IMR-90 (cell line): ENCODE measurements at regions of chr1 and their contacts with region 1.

Region 1: DNA sequence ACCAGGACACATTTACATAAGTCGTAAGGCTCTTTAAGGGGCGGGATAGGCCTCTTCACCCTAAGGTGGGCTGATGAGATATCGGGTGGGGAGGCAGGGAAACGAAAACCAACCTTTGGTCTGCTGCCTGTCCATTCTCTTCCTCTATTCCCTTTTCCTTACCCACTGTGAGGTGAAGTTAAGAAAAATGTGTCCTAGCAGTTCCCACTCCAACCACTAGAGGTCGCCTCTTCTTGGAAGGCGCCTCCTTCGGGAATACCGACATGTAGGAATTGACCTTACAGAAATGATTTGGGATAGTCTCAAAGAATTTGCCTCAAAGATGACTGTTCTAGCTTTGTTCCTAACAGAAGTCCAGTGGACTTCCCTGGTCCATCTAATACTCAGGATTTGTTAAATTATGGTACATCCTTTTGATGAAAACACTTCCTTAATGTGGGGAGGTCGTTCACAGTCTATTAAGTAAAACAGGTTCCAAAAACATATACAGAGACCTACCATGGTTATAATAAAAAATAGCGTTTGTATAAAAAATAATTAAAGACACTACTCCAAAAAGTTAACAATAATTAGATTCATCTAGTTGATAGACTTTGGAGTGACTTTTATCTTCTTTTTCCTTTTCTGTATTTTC is 14.1 kb downstream of the AZIN2 start:
- DNase-seq: peak; percentile 71
- ATAC-seq: no peak
- H3K4me3 ChIP-seq: no peak overlapping the region
- H3K27ac ChIP-seq: peak overlapping the region; percentile 43; the same call in 1 of the 2 replicates
- H3K4me1 ChIP-seq: peaks cover 35% of the 10 kb centered on the region
- H3K27me3 ChIP-seq: no peaks in the 10 kb centered on the region
- CTCF ChIP-seq: peak; percentile 93
- POLR2A ChIP-seq: no peak
- RAD21 ChIP-seq: peak; percentile 71

Region 2: GRCh38 chr1:32659581-32659980 is 435.5 kb before region 1 on chr1:
- CTCF ChIA-PET with region 1: no interaction called
- POLR2A ChIA-PET with region 1: no interaction called
- dilution Hi-C with region 1: no loop called
- in situ Hi-C with region 1: no loop called
- intact Hi-C with region 1: no loop called
- DNase-seq: no peak
- ATAC-seq: no peak
- H3K4me3 ChIP-seq: no peak overlapping the region
- H3K27ac ChIP-seq: no peak overlapping the region
- H3K4me1 ChIP-seq: peaks cover 2% of the 10 kb centered on the region; the same call in 1 of the 2 replicates
- H3K27me3 ChIP-seq: no peaks in the 10 kb centered on the region
- CTCF ChIP-seq: no peak
- POLR2A ChIP-seq: no peak
- RAD21 ChIP-seq: no peak

Region 3: GRCh38 chr1:32702599-32703478 is 392.2 kb before region 1 on chr1 and contains the start of gene SYNC:
- CTCF ChIA-PET with region 1: no interaction called
- POLR2A ChIA-PET with region 1: no interaction called
- dilution Hi-C with region 1: no loop called
- in situ Hi-C with region 1: no loop called
- intact Hi-C with region 1: loop called (anchors 10 kb)
- DNase-seq: peak; percentile 78
- ATAC-seq: peak; percentile 55
- H3K4me3 ChIP-seq: peak within 1 kb of the TSS; percentile 77
- H3K27ac ChIP-seq: peak within 1 kb of the TSS; percentile 97
- H3K4me1 ChIP-seq: peaks cover 15% of the 10 kb centered on the region
- H3K27me3 ChIP-seq: no peaks in the 10 kb centered on the region
- CTCF ChIP-seq: no peak
- POLR2A ChIP-seq: peak; percentile 78
- RAD21 ChIP-seq: 0 out of 2 replicates have a peak, but pooled peaks have one; percentile 1
- total RNA-seq, gene SYNC: 103 and 139 TPM in 2 replicates

Region 4: DNA sequence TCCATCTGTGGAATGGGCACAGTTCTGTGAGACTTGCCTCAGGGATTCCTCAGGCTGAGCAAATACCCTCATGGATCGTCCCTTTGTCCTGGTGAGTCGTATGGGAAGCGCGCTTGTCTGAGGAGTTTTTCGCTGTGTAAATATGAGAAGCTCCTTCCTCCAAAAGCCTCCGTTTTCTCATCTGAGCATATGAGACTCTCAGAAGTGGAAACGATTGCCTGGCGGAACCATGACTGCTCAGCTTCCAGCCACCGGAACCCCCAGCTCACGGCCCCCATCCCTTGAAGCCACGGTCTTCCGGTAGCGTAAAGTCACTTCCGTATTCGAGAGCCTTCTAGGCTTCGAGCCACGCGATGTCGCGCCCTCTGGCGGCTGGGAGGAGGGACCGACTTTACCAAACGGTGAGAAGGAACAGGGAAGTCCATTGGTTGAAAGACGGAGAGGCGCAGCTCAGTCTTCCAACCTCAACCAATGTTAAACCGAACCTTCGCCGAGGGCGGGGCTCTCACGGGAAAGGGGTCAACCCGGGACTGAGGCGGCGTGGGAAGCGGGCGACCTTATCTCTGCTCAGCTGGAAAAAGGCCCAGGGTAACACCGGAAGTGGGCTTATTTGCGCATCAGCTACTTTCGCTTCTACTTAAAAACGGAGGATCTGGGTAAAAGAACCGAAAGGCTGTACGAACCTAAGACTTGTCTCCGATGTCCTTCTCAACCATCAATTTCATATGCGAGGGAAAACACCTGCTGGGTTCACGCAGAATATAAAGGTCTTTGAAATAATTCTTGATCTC is 32.1 kb after region 1 on chr1:
- CTCF ChIA-PET with region 1: interaction called, 8 read pairs
- POLR2A ChIA-PET with region 1: interaction called, 6 read pairs
- dilution Hi-C with region 1: no loop called
- in situ Hi-C with region 1: no loop called
- intact Hi-C with region 1: loop called (anchors 1 kb)
- DNase-seq: peak; percentile 100
- ATAC-seq: peak; percentile 98
- H3K4me3 ChIP-seq: peak overlapping the region; percentile 74
- H3K27ac ChIP-seq: peak overlapping the region; percentile 95
- H3K4me1 ChIP-seq: peaks cover 3% of the 10 kb centered on the region; the same call in 1 of the 2 replicates
- H3K27me3 ChIP-seq: no peaks in the 10 kb centered on the region
- CTCF ChIP-seq: peak; percentile 99
- POLR2A ChIP-seq: peak; percentile 96
- RAD21 ChIP-seq: peak; percentile 50

Region 5: DNA sequence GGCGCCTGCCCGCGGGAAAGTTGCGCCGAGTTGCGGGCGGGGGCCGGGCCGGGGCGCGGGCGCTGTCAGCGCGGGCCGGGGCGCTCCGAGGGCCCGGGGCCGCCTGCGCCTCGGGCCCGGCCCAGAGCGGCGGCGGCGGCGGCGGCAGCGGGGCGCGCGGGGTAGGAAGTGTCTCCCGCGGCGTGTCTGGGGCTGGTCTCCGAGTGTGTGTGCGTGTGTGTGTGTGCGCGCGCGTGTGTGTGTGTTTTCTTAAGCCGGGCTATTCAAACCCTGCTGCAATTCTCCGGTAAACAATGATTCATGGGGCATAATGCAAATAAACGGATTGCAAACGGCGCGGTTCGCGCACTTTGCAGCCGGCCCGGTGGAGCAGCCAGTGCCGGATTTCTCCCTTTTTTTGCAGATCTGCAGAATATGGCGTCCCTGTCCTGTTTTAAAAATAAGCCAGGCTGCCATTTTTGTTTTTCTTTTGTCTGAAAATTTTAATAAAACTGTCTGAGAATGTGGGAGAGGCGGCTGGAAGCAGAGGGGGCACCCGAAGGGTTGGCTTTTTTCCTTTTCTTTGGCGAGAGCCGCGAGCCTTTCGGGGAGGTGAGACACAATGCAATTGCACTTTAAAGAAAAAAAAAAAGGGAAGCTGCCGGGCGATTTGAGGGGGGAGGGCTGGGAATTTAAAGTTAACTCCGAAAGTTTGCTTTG is 161.8 kb after region 1 on chr1:
- CTCF ChIA-PET with region 1: no interaction called
- POLR2A ChIA-PET with region 1: no interaction called
- dilution Hi-C with region 1: no loop called
- in situ Hi-C with region 1: no loop called
- intact Hi-C with region 1: loop called (anchors 5 kb)
- DNase-seq: peak; percentile 83
- ATAC-seq: peak; percentile 69
- H3K4me3 ChIP-seq: peak overlapping the region; percentile 59
- H3K27ac ChIP-seq: peak overlapping the region; percentile 86
- H3K4me1 ChIP-seq: peaks cover 15% of the 10 kb centered on the region
- H3K27me3 ChIP-seq: no peaks in the 10 kb centered on the region; the same call in 1 of the 2 replicates
- CTCF ChIP-seq: no peak
- POLR2A ChIP-seq: no peak
- RAD21 ChIP-seq: no peak

Region 6: DNA sequence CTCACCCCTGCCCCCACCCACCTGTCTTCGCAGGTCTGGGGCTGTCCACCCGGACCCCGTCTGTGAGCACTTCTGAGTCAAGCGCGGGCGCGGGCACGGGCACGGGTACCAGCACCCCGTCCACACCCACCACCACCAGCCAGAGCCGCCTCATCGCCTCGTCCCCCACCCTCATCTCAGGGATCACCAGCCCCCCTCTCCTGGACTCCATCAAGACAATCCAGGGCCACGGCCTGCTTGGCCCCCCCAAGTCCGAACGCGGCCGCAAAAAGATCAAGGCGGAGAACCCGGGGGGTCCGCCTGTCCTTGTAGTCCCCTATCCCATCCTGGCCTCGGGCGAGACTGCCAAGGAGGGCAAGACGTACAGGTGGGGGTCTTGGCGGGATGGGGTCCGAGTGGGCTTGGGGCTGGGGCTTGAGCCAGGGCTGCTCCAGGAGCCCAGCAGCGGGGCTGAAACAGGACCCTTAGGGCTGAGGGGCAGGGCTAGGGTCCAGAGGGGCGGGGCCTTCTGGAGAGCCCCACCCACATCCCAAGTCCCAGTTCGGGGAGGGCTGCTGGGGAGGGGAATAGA is 185.1 kb after region 1 on chr1:
- CTCF ChIA-PET with region 1: no interaction called
- POLR2A ChIA-PET with region 1: no interaction called
- dilution Hi-C with region 1: no loop called
- in situ Hi-C with region 1: no loop called
- intact Hi-C with region 1: loop called (anchors 10 kb)
- DNase-seq: no peak
- ATAC-seq: no peak
- H3K4me3 ChIP-seq: no peak overlapping the region
- H3K27ac ChIP-seq: no peak overlapping the region
- H3K4me1 ChIP-seq: no peaks in the 10 kb centered on the region
- H3K27me3 ChIP-seq: no peaks in the 10 kb centered on the region
- CTCF ChIP-seq: no peak
- POLR2A ChIP-seq: no peak
- RAD21 ChIP-seq: no peak

Region 7: GRCh38 chr1:33460947-33461629 is 366.0 kb after region 1 on chr1:
- CTCF ChIA-PET with region 1: interaction called, 6 read pairs
- POLR2A ChIA-PET with region 1: no interaction called
- dilution Hi-C with region 1: no loop called
- in situ Hi-C with region 1: loop called (anchors 10 kb)
- intact Hi-C with region 1: no loop called
- DNase-seq: no peak
- ATAC-seq: no peak
- H3K4me3 ChIP-seq: no peak overlapping the region
- H3K27ac ChIP-seq: no peak overlapping the region
- H3K4me1 ChIP-seq: peaks cover 11% of the 10 kb centered on the region
- H3K27me3 ChIP-seq: no peaks in the 10 kb centered on the region
- CTCF ChIP-seq: no peak
- POLR2A ChIP-seq: no peak
- RAD21 ChIP-seq: no peak